Activated B cell treated with CpG ODN at 0.5 μM for 24 hours (primary cell): ENCODE measurements at regions of chr19 and their contacts with region 1.

Region 1: DNA sequence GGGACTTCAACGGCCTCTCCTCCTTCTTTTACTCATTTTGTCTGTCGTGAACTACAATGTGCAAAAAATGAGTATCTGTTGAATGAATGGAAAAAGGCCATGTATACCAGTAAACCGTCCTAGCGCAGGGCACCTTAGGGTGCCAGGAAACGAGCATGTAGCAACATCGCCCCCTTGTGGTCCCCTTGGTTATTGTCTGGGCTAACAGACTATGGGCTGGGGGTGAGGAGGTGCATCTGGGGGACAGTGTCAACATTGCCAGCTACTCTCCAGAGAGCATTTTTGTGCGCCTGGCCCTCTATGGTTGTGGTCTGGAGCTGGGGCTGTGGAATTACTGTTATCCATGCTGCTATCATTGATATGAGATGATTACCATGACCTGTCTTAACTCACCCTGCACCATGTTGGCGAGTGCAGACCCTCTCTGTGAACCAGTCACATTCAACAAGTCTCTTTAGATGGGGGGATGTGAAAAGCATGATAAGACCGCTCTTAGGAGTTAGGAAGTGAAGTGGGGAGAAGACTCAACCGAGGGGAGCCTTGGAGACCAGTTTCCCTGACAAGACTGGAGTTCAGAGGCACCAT is 22.8 kb upstream of the SIGLEC11 start:
- DNase-seq: peak; percentile 66
- ATAC-seq: peak; percentile 74
- H3K4me3 Mint-ChIP-seq: no peak overlapping the region
- H3K27ac Mint-ChIP-seq: no peak overlapping the region
- H3K4me1 Mint-ChIP-seq: peaks cover 2% of the 10 kb centered on the region
- H3K27me3 Mint-ChIP-seq: no peaks in the 10 kb centered on the region
- CTCF ChIP-seq: peak; percentile 63

Region 2: DNA sequence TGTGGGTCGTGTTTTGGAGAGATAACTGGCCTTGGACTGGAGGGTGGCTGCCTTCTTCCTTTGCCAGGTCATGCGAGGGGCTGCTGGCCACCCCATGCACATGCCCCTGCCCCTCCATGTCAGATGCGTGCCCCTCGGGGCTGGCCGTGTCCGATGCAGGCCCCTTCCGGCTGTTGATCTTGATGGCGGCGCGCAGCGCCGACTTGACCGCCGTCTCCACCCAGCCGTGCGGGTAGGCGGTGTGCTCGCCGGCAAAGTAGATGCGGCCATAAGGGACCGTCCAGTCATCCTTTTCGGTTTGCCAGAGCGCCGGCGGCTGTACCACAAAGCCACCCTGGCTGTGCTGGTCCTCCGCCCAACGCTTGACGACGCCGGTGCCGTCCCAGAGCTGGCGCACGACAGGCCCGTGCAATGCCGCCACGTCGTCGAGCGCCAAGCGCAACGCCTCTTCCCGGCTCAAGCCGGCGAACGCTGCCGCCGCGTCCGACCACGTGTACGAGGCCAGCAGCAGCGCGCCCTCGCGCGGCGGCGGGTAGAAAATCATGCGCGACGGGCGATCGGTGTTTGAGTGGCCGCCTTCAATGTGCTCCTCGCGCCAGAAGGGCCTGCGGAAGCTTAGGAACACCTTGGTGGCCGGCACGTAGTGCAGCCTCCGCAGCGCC is 93.9 kb before region 1 on chr19:
- CTCF ChIA-PET with region 1: no interaction called
- POLR2A ChIA-PET with region 1: no interaction called
- intact Hi-C with region 1: loop called (anchors 1 kb)
- DNase-seq: no peak
- ATAC-seq: peak; percentile 66
- H3K4me3 Mint-ChIP-seq: peak overlapping the region; percentile 82
- H3K27ac Mint-ChIP-seq: peak overlapping the region; percentile 7
- H3K4me1 Mint-ChIP-seq: peaks cover 41% of the 10 kb centered on the region
- H3K27me3 Mint-ChIP-seq: no peaks in the 10 kb centered on the region
- CTCF ChIP-seq: peak; percentile 39

Region 3: DNA sequence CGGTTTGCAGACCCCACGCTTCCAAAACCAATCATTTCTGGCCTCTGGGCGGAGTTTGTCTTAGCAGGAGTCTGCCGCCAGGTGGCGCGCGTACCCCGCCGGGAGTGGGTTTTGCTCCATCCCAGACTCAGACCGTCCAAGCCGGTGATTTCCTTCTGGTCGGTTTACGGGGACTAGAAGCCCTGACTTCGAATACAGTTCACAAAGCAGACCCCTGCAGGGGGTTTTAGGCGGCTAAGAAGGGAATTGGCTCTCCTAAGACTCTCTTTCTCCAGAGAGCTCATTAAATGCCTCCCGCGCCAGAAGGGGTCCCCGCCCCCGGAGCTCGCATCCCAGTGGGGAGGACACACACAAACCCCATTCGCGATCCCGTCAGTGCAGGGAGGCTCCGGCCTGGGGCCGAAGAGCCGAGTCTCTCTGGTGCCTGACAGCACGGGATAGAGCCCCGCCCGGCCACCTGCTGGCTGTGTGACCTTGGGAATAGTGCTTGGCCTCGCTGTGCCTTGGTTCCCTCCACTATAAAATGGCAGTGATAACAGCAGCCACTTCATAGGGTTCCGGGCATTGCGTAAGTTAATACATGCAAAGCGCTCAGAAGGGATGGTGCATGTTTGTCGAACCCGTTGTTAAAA is 45.9 kb before region 1 on chr19:
- CTCF ChIA-PET with region 1: interaction called, 6 read pairs
- POLR2A ChIA-PET with region 1: interaction called, 3 read pairs
- intact Hi-C with region 1: loop called (anchors 1 kb)
- DNase-seq: peak; percentile 80
- ATAC-seq: peak; percentile 83
- H3K4me3 Mint-ChIP-seq: no peak overlapping the region
- H3K27ac Mint-ChIP-seq: no peak overlapping the region
- H3K4me1 Mint-ChIP-seq: peaks cover 6% of the 10 kb centered on the region
- H3K27me3 Mint-ChIP-seq: peaks cover 4% of the 10 kb centered on the region
- CTCF ChIP-seq: peak; percentile 79

Region 4: GRCh38 chr19:50025024-50025789 is 41.5 kb after region 1 on chr19 and contains the start of gene VRK3:
- CTCF ChIA-PET with region 1: no interaction called
- POLR2A ChIA-PET with region 1: no interaction called
- intact Hi-C with region 1: loop called (anchors 2 kb)
- DNase-seq: peak; percentile 95
- ATAC-seq: peak; percentile 87
- H3K4me3 Mint-ChIP-seq: peak within 1 kb of the TSS; percentile 97
- H3K27ac Mint-ChIP-seq: peak within 1 kb of the TSS; percentile 100
- H3K4me1 Mint-ChIP-seq: peaks cover 46% of the 10 kb centered on the region
- H3K27me3 Mint-ChIP-seq: no peaks in the 10 kb centered on the region
- CTCF ChIP-seq: no peak
- total RNA-seq, gene VRK3: 71.1 and 82.6 TPM in 2 replicates